ENCODE measurements at regions of chr9 and their contacts with region 1.

Region 1: DNA sequence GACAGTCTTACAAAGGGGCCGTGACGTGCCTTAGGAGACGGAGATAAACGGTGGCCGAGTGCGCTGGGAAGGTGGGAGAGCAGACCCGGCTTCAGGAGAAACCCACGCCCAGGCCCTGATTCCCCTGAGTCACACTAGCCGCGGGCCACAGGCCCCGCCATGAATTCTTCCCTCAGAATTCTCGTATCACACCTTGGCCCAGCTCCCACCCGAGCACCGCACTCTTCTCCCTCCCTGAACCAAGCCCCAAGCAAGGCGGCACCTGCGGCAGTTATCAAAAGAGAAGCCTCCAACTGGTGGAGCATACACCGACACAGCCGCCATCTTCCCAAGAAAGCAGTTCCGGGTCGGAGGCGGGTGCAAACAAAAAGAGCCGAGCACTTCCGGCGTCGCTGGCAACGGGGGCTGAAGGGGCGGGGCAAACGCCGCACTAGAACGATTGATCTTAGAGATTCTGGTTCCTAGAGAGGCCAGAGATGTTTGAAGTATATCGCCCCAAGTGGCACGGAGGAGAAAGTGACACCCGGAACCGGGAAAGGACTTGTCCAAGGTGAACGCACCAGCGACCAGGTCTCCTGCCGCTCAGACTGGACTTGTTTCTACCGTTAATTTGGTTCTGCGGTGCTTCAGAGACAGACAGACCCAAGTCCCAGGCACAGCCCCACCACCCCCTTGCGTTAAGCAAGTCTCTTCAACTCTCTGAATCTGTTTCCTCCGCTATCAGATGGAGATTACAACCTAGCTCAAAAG is at the start of gene PSMB7:
- DNase-seq: peak; percentile 99
- ATAC-seq: peak; percentile 94
- H3K4me3 Mint-ChIP-seq: peak within 1 kb of the TSS; percentile 93
- H3K27ac Mint-ChIP-seq: peak within 1 kb of the TSS; percentile 89
- H3K4me1 Mint-ChIP-seq: peaks cover 43% of the 10 kb centered on the region
- H3K27me3 Mint-ChIP-seq: no peaks in the 10 kb centered on the region
- total RNA-seq, gene PSMB7: 143 to 164 TPM

Region 2: GRCh38 chr9:123637945-123638634 is 777.2 kb before region 1 on chr9:
- CTCF ChIA-PET with region 1: no interaction called
- POLR2A ChIA-PET with region 1: no interaction called
- intact Hi-C with region 1: no loop called
- DNase-seq: peak; percentile 21
- ATAC-seq: peak; percentile 22
- H3K4me3 Mint-ChIP-seq: peak overlapping the region; percentile 45
- H3K27ac Mint-ChIP-seq: peak overlapping the region; percentile 4
- H3K4me1 Mint-ChIP-seq: peaks cover 41% of the 10 kb centered on the region
- H3K27me3 Mint-ChIP-seq: no peaks in the 10 kb centered on the region

Region 3: DNA sequence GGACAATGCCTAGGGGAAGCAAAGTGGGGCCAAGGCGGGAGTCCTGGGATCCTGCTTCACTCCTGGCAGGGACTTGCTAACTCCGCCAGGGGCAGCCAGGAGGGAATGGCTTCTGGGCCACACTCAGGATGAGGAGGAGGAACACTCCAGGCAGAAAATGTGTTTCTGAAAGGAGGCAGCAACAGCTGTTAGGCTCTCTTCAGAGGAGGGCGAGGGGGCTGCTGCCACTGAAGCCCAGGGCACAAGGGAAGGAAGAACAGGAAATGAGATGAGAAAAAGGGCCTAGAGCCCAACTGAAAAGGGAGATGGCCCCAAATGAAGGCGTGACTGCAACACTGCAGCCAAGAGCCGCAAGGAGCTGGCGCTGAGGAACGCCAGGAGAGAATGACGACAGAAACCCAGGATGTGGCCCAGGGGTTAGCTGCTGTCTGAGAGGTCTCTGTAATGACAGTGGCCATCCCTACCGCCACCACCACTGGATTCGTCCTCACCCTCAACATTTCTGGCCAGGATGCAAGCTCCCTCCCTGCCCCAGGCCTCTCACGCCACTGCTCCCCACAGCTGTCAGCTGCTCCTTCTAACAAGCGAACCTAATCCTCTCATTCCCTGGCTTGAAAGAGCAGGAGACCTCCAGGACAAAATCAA is 15.8 kb before region 1 on chr9:
- CTCF ChIA-PET with region 1: interaction called, 17 read pairs
- POLR2A ChIA-PET with region 1: interaction called, 3 read pairs
- intact Hi-C with region 1: no loop called
- DNase-seq: no peak
- ATAC-seq: no peak
- H3K4me3 Mint-ChIP-seq: no peak overlapping the region
- H3K27ac Mint-ChIP-seq: no peak overlapping the region
- H3K4me1 Mint-ChIP-seq: peaks cover 24% of the 10 kb centered on the region
- H3K27me3 Mint-ChIP-seq: no peaks in the 10 kb centered on the region

Region 4: DNA sequence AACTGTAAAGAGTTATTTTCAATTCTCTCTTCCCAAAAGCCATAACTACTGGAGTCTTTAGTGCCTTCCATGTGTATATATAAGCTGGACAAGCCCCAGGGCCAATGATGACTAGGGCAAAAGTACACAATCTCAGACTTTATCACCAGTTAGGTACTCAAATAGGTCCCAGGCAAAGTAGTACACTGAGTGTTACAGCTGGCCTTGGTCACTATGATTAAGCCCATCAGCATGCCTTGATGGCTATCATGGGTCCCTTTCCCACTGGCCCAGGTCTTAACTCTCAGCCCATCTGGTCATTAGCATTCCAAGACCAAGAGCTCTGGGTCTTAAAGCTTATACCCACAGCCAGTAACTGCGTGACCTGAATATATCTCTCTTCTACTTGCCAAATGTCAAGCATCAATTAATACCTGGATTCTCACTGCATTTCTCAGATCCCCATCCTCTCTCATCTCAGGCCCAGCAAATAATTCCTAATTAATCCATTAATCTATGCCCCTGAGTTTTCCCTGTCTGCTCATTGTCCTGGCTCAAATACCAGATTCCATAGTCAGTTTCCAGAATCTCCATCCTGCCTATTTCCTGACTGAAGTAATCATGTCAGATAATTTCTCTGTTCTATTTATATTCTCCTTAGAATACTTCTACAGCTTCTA is 293.5 kb after region 1 on chr9:
- CTCF ChIA-PET with region 1: no interaction called
- POLR2A ChIA-PET with region 1: no interaction called
- intact Hi-C with region 1: loop called in 1 of 2 experiments (anchors 1 kb)
- DNase-seq: no peak
- ATAC-seq: no peak
- H3K4me3 Mint-ChIP-seq: no peak overlapping the region
- H3K27ac Mint-ChIP-seq: no peak overlapping the region
- H3K4me1 Mint-ChIP-seq: no peaks in the 10 kb centered on the region
- H3K27me3 Mint-ChIP-seq: peaks cover 14% of the 10 kb centered on the region

Region 5: GRCh38 chr9:124868511-124869465 is 453.5 kb after region 1 on chr9:
- CTCF ChIA-PET with region 1: no interaction called
- POLR2A ChIA-PET with region 1: no interaction called
- intact Hi-C with region 1: loop called (anchors 1 to 5 kb)
- DNase-seq: peak; percentile 96
- ATAC-seq: peak; percentile 59
- H3K4me3 Mint-ChIP-seq: peak overlapping the region; percentile 98
- H3K27ac Mint-ChIP-seq: peak overlapping the region; percentile 98
- H3K4me1 Mint-ChIP-seq: peaks cover 42% of the 10 kb centered on the region
- H3K27me3 Mint-ChIP-seq: no peaks in the 10 kb centered on the region

Region 6: DNA sequence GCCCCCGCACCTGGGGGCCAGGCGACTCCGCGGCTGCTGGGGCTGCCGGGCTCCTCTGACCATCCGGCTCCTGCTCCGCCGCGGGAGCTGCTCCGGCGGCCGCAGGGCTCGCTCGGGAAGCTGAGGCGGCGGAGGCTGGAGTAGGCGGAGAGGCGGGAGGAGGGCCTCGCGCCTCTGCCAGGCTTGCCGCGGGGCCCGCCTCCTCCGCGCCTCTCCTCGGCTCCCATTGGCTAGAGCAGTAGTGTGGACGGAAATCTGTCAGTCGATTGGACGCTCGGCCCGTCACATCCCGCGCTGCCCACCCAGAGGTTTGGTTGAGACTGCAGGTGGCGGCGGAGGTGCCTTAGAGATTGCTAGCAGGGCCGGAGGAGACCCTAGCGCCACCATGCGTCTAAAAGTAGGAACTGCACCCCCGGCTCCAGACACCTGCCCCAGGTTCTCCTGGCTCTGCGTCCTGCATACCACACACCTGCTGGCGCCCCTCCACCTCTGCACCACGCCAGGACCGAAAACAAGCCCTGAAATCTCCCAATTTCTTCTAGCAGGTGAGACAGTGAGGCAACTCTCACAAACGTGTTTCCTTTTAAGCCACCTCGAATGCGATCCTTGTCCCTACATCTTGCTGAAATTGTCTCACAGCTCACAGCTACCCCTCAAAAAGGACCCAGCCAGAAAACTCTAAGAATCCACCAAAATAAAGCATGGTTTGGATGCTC is 728.3 kb after region 1 on chr9 and contains the start of gene SCAI:
- CTCF ChIA-PET with region 1: no interaction called
- POLR2A ChIA-PET with region 1: no interaction called
- intact Hi-C with region 1: loop called in 1 of 2 experiments (anchors 1 kb)
- DNase-seq: peak; percentile 99
- ATAC-seq: peak; percentile 100
- H3K4me3 Mint-ChIP-seq: peak within 1 kb of the TSS; percentile 83
- H3K27ac Mint-ChIP-seq: peak within 1 kb of the TSS; percentile 69
- H3K4me1 Mint-ChIP-seq: peaks cover 35% of the 10 kb centered on the region
- H3K27me3 Mint-ChIP-seq: no peaks in the 10 kb centered on the region
- total RNA-seq, gene SCAI: 13.0 to 13.8 TPM

Region 7: DNA sequence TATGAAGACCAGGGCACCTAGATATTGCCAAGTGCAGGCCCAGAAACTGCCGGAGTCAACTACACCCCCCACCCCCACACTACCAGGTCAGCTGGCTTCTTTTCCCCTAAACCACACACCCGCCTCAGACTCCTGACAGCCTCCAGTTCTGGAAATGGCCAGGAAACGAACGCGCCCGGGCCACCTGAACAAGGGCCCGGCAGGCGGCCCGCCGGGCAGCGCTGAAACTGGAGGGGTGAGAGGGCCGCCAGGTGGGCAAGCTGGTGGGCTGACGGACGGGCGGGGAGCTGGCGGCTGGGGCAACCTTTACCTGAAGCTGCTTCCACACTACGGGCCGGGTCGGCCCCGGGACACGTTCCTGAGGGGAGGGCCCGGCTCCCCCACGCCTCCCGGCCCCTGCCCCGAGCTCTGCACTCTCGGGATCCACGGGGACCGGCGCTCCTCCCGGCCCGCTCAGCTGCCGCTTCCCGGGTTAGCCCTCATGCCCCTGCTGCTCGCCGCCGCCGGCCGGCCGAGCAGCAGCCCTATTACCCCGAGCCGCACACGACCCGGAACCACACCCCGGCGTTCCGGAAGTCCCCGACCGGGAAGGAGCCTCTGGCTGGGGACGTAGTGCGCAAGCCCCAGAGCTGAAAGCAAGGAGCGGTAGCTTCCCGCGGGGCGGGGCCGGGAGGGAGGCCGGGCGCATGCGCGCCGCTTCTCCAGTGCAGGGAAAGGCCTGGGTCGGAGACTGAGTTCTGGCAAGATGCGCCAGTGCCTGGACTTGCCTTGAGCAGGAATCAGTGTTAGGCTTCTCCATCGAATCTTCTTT is 1291.6 kb after region 1 on chr9 and contains the start of gene MAPKAP1:
- CTCF ChIA-PET with region 1: no interaction called
- POLR2A ChIA-PET with region 1: no interaction called
- intact Hi-C with region 1: loop called in 1 of 2 experiments (anchors 10 kb)
- DNase-seq: peak; percentile 97
- ATAC-seq: peak; percentile 100
- H3K4me3 Mint-ChIP-seq: peak within 1 kb of the TSS; percentile 86
- H3K27ac Mint-ChIP-seq: peak within 1 kb of the TSS; percentile 83
- H3K4me1 Mint-ChIP-seq: peaks cover 44% of the 10 kb centered on the region
- H3K27me3 Mint-ChIP-seq: no peaks in the 10 kb centered on the region
- total RNA-seq, gene MAPKAP1: 51.6 to 61.9 TPM